ENCODE measurements at regions of chr11 and their contacts with region 1.

Region 1: DNA sequence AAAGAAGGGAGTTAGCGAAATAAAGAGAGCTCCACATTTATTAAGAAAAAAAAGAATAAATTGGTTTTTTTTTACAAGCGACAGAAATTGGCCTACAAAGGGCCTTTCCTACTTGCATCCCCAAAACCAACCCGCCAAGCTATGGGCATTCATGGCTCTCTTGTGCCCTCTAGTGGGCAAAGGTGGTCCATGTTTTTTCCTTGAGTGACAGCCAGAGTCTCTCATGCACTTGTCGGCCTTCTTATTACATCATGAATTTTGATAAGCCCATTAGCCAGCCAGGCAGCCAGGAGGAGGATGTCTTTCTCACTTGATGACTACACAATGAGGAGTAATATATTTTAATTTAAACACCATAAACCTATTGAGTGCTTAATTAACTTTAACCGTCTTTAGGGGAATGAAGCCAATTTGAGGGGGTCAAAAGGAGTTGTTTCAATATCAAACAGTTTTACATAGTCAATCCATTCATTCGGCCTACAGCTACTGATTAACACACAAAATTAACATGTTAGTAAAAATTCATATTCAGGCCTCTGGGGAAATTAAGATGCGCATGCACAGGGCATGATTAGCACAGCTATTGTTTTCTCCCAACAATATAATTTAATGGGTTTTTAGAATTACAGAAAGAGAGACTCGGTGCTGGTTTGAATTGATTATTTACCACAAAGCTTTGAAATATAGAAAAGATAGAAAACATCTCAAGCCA is 85.5 kb downstream of the RCN1 start:
- DNase-seq: peak; percentile 74
- CTCF ChIP-seq: peak; percentile 91

Region 2: DNA sequence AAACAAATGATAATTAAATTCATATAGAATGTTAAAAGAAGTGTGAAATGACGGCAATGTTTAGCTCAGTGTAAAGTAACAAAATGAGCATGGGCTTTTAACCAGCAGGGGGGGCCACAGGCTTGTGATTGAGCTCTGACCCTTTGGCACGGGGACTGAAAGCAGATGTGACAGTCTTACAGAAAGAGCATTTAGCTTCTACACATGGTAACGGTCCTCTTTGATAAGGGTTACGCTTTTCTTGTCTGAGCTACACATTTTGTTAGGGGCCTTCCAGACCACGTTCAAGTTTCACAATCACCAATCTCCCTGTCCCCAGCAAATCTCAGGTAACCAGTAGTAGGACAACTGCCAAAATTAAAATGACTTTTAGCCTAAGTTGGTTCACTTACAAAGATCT is 1069.3 kb before region 1 on chr11:
- CTCF ChIA-PET with region 1: interaction called, 21 read pairs
- POLR2A ChIA-PET with region 1: no interaction called
- DNase-seq: peak; percentile 26
- CTCF ChIP-seq: peak; percentile 60

Region 3: GRCh38 chr11:32006799-32007388 is 169.5 kb before region 1 on chr11:
- CTCF ChIA-PET with region 1: interaction called, 10 read pairs
- POLR2A ChIA-PET with region 1: no interaction called
- DNase-seq: peak; percentile 52
- CTCF ChIP-seq: peak; percentile 74

Region 4: DNA sequence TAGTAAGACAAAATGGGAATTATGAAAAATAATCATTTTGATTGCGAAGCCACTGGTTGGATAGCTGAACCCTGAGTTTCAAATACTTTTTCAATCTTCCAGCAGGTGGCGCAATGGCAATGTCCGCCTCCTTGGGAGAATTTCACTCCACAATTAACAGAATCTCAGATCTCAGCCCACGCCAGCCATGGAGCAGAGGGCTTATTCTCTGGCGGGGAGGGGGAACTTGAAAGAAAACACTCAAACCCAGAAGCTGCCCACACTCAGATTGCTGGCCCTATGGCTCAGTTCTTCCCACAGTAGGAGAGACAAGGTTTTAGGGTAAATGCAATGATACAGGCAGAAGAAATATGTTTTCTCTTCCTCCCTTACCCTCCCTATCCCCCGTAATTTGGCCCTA is 124.2 kb before region 1 on chr11:
- CTCF ChIA-PET with region 1: interaction called, 256 read pairs
- POLR2A ChIA-PET with region 1: no interaction called
- DNase-seq: peak; percentile 52
- CTCF ChIP-seq: peak; percentile 62

Region 5: DNA sequence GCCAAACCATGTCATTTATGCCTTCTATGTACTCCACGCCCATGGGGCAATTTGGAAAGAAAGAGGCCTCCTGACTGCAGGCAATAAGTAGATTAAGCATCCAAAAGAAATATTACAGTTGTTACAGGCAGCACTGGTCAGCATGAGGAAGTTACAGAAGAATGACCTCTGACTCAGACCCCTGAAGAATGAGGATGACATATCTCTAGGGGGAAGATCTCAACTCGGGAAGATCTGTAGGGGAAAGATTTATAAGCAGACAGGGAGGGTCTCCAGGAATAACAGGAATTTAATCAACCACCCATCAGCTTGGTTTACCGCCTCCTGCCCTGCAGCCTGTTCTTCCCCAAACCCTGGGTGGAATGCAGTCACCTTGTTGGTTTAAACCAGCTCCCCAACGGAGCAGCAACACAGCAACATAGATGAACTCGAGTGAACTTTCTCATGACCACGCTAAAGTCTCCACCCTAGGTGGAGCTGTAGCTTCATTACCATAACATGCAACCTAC is 27.4 kb before region 1 on chr11:
- CTCF ChIA-PET with region 1: interaction called, 13 read pairs
- POLR2A ChIA-PET with region 1: no interaction called
- DNase-seq: no peak
- CTCF ChIP-seq: no peak

Region 6: GRCh38 chr11:32162351-32162750 is 14.0 kb before region 1 on chr11:
- CTCF ChIA-PET with region 1: interaction called, 51 read pairs
- POLR2A ChIA-PET with region 1: no interaction called
- DNase-seq: no peak
- CTCF ChIP-seq: no peak

Measured in GM10248 (cell line).